ENCODE measurements at regions of chrX and their contacts with region 1.

Region 1: GRCh38 chrX:103214870-103215424 is at the start of gene BEX4:
- DNase-seq: peak; percentile 87
- H3K4me3 Mint-ChIP-seq: peak within 1 kb of the TSS; percentile 82
- H3K27ac Mint-ChIP-seq: peak within 1 kb of the TSS; percentile 50
- H3K4me1 Mint-ChIP-seq: peaks cover 15% of the 10 kb centered on the region
- H3K27me3 Mint-ChIP-seq: no peaks in the 10 kb centered on the region
- total RNA-seq, gene BEX4: 8.8 to 9.8 TPM

Region 2: GRCh38 chrX:102599084-102599950 is 615.6 kb before region 1 on chrX and contains the start of gene ARMCX5:
- CTCF ChIA-PET with region 1: no interaction called
- intact Hi-C with region 1: no loop called
- DNase-seq: peak; percentile 79
- H3K4me3 Mint-ChIP-seq: peak within 1 kb of the TSS; percentile 100
- H3K27ac Mint-ChIP-seq: peak within 1 kb of the TSS; percentile 96
- H3K4me1 Mint-ChIP-seq: peaks cover 33% of the 10 kb centered on the region
- H3K27me3 Mint-ChIP-seq: no peaks in the 10 kb centered on the region
- total RNA-seq, gene ARMCX5: 9.5 to 11.4 TPM

Region 3: DNA sequence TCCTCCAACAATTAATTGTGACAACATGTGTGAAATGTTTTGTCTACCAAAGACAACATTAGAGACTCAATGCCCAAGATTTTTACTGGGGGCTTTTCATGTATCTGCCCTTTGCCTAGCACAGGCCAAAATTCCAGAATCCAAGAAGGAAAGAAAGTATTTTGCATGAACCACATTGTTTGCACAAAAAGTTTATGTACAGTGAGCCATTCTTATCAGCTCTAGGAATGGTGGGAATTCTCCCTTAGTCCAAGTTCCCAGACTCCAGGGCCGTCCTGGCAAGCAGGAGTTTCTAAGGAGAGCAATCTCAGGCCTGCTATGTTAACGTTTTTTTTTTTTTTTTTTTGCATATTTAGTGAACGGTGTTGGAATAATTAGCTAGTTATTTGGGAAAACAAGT is 542.1 kb before region 1 on chrX:
- CTCF ChIA-PET with region 1: no interaction called
- intact Hi-C with region 1: no loop called
- DNase-seq: no peak
- H3K4me3 Mint-ChIP-seq: no peak overlapping the region
- H3K27ac Mint-ChIP-seq: no peak overlapping the region
- H3K4me1 Mint-ChIP-seq: peaks cover 6% of the 10 kb centered on the region
- H3K27me3 Mint-ChIP-seq: no peaks in the 10 kb centered on the region

Region 4: DNA sequence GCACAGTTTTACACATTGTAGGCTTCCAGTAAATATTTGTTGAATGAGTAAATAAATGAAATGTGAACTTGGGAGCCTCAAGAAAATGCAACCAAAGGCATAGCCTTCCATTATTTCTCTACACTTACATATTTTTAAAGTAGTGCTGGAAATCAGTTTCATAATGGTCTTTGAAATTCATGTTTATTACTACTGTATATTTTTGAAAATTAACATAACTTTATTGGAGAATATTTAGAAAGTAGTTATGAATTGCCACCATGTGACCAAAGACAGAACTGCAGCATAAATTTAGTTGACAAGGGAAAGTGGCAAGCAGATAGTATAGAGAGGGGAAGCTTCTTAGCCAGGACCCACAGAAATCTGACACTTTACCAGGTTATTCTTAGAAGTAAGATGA is 33.6 kb after region 1 on chrX:
- CTCF ChIA-PET with region 1: interaction called, 14 read pairs
- intact Hi-C with region 1: loop called (anchors 1 kb)
- DNase-seq: no peak
- H3K4me3 Mint-ChIP-seq: no peak overlapping the region
- H3K27ac Mint-ChIP-seq: no peak overlapping the region
- H3K4me1 Mint-ChIP-seq: peaks cover 3% of the 10 kb centered on the region
- H3K27me3 Mint-ChIP-seq: no peaks in the 10 kb centered on the region

Region 5: DNA sequence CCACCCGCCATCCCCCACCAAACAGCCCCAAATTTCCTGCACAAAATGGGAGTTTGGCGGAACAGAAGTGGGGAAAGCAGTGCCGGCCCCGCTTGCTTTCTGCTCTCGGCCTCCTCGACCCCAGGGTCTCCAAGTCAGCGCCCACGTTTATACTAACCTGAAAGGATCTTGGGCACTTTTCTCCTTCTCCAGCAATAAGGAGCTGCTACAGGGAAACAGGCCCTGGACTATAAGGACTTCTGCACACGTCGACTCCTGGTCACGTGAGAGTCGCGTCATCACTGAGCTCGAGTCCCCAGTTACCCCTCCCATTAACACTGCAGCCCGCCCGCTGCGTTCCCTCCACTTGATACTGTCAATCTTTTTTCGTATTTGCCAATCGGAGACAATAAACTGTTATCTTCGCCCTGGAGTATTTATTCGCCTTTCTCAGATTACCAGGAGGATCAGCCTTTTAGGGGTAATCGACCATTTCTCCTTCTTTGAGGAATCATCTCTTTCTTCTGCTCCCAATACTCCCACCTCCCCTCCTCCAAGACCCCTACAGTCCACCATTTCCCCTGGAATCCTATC is 40.1 kb after region 1 on chrX and contains the start of gene TCEAL8:
- CTCF ChIA-PET with region 1: interaction called, 14 read pairs
- intact Hi-C with region 1: loop called (anchors 1 kb)
- DNase-seq: peak; percentile 79
- H3K4me3 Mint-ChIP-seq: peak within 1 kb of the TSS; percentile 94
- H3K27ac Mint-ChIP-seq: peak within 1 kb of the TSS; percentile 96
- H3K4me1 Mint-ChIP-seq: peaks cover 14% of the 10 kb centered on the region
- H3K27me3 Mint-ChIP-seq: no peaks in the 10 kb centered on the region
- total RNA-seq, gene TCEAL8: 24.5 to 27.7 TPM

Region 6: DNA sequence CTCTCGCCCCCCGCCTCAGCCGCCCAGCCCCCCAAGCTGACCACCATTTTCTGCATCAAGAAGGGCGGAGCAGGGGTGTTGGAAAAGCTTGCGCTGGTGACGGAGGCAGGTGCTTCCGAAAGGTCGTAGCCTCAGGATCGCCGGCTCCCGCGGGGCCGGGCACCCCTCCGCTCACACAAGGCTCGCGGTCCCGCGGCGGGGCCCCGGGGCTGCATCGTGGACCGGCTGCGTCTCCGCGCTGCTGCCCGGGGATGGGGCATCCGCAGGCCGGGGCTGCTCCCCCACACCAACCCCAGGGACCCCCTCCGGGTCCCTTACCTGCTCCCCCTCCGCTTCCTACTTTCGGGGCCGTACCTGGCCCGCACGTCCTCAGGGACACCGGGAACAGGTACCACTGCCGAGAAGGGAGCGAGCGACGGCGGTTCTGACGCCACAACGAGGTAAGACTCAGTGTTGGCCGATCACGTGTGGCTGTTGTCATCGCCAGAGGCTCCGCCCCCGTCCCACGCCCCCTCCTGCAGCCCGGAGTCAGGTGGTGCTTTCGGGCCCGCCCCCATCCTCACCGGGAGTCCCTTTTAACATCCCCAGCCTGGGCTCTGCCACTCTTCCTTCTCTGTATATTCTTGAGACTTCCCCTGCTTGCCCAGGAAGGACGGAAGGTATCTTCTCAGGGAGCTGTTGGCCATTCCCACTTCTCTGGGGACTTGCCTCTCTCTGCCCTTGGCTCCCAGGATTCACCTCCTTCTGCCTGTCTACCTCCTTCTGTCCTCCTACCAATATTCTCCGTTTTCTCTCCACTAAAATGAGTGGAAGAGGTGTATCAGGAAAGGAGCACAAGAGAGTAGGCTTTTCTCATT is 95.8 kb after region 1 on chrX and contains the start of gene BEX2:
- CTCF ChIA-PET with region 1: interaction called, 3 read pairs
- intact Hi-C with region 1: loop called (anchors 2 kb)
- DNase-seq: peak; percentile 91
- H3K4me3 Mint-ChIP-seq: peak within 1 kb of the TSS; percentile 70
- H3K27ac Mint-ChIP-seq: peak within 1 kb of the TSS; percentile 53
- H3K4me1 Mint-ChIP-seq: peaks cover 9% of the 10 kb centered on the region
- H3K27me3 Mint-ChIP-seq: no peaks in the 10 kb centered on the region
- total RNA-seq, gene BEX2: 16.0 to 18.9 TPM

Region 7: GRCh38 chrX:103343105-103343504 is 128.2 kb after region 1 on chrX:
- CTCF ChIA-PET with region 1: interaction called, 3 read pairs
- intact Hi-C with region 1: loop called (anchors 5 kb)
- DNase-seq: peak; percentile 65
- H3K4me3 Mint-ChIP-seq: no peak overlapping the region
- H3K27ac Mint-ChIP-seq: no peak overlapping the region
- H3K4me1 Mint-ChIP-seq: peaks cover 4% of the 10 kb centered on the region
- H3K27me3 Mint-ChIP-seq: peaks cover 2% of the 10 kb centered on the region

Region 8: GRCh38 chrX:103488794-103489193 is 273.8 kb after region 1 on chrX:
- CTCF ChIA-PET with region 1: interaction called, 4 read pairs
- intact Hi-C with region 1: loop called (anchors 1 kb)
- DNase-seq: no peak
- H3K4me3 Mint-ChIP-seq: no peak overlapping the region
- H3K27ac Mint-ChIP-seq: no peak overlapping the region
- H3K4me1 Mint-ChIP-seq: no peaks in the 10 kb centered on the region
- H3K27me3 Mint-ChIP-seq: no peaks in the 10 kb centered on the region

Measured in activated naive CD4-positive, alpha-beta T cell treated with anti-CD3 and anti-CD28 coated beads for 36 hours (primary cell).